PC-9 (cell line): ENCODE measurements at regions of chr16 and their contacts with region 1.

Region 1: GRCh38 chr16:85554112-85554813 is 58.9 kb upstream of the GSE1 start:
- DNase-seq: peak; percentile 63 to 76
- H3K4me3 ChIP-seq: peak overlapping the region; percentile 72
- H3K27ac ChIP-seq: peak overlapping the region; percentile 62
- H3K4me1 ChIP-seq: peaks cover 22% of the 10 kb centered on the region
- H3K27me3 ChIP-seq: no peaks in the 10 kb centered on the region
- CTCF ChIP-seq: no peak

Region 2: GRCh38 chr16:85448557-85449197 is 105.6 kb before region 1 on chr16:
- CTCF ChIA-PET with region 1: interaction called, 18 read pairs
- POLR2A ChIA-PET with region 1: no interaction called
- intact Hi-C with region 1: no loop called
- DNase-seq: no peak
- H3K4me3 ChIP-seq: no peak overlapping the region
- H3K27ac ChIP-seq: no peak overlapping the region
- H3K4me1 ChIP-seq: no peaks in the 10 kb centered on the region
- H3K27me3 ChIP-seq: no peaks in the 10 kb centered on the region
- CTCF ChIP-seq: no peak

Region 3: GRCh38 chr16:85498273-85499006 is 55.8 kb before region 1 on chr16:
- CTCF ChIA-PET with region 1: interaction called, 10 read pairs
- POLR2A ChIA-PET with region 1: interaction called, 3 read pairs
- intact Hi-C with region 1: no loop called
- DNase-seq: no peak
- H3K4me3 ChIP-seq: no peak overlapping the region
- H3K27ac ChIP-seq: no peak overlapping the region
- H3K4me1 ChIP-seq: no peaks in the 10 kb centered on the region; the same call in 1 of the 2 replicates
- H3K27me3 ChIP-seq: no peaks in the 10 kb centered on the region
- CTCF ChIP-seq: no peak

Region 4: DNA sequence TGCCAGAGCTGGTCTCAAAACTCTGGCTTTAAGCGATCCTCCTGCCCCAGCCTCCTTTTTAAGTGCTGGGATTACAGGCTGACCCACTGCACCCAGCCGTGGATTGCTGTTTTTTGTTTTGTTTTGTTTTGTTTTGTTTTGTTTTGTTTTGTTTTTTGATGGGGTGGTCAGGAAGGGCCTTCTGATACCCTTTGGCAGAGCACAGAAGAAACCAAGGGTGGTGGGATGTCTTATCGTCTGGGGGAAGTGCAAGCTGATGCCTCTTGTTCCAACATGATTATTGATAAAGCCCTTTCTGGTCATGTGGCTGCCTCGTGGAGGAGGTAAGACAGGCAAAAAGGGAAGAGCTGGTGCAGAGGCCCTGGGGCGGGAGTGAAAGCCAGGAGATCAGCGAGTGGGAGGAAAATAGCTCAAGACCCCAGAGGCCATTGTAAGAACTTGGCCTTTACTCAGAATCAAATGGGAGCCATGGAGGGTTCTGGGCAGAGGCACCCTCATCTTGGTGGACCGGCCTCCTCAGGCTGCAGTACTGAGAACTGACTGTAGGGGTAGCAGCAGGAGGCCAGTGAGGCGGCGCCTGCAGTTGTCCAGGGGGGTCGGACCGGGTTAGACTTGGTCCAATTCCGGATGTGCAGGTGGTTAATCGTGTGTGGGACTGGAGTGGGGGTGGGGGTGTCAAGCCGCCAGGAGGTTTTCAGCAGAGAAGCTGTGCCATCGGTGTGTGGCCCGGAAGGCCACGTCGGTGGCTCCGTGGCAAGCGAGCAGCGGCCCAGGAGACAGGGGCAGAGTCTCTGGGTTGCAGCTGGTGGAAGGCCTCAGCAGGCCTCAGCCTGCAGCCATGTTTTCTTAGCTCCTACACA is 25.5 kb before region 1 on chr16:
- CTCF ChIA-PET with region 1: interaction called, 6 read pairs
- POLR2A ChIA-PET with region 1: interaction called, 7 read pairs
- intact Hi-C with region 1: loop called (anchors 2 kb)
- DNase-seq: no peak
- H3K4me3 ChIP-seq: no peak overlapping the region
- H3K27ac ChIP-seq: no peak overlapping the region
- H3K4me1 ChIP-seq: peaks cover 25% of the 10 kb centered on the region
- H3K27me3 ChIP-seq: no peaks in the 10 kb centered on the region
- CTCF ChIP-seq: peak; percentile 60

Region 5: GRCh38 chr16:85601730-85602401 is 47.6 kb after region 1 on chr16:
- CTCF ChIA-PET with region 1: no interaction called
- POLR2A ChIA-PET with region 1: no interaction called
- intact Hi-C with region 1: no loop called
- DNase-seq: no peak
- H3K4me3 ChIP-seq: no peak overlapping the region
- H3K27ac ChIP-seq: no peak overlapping the region
- H3K4me1 ChIP-seq: no peaks in the 10 kb centered on the region
- H3K27me3 ChIP-seq: no peaks in the 10 kb centered on the region
- CTCF ChIP-seq: no peak